Endothelial cell of umbilical vein (primary cell): ENCODE measurements at regions of chr4 and their contacts with region 1.

Region 1: DNA sequence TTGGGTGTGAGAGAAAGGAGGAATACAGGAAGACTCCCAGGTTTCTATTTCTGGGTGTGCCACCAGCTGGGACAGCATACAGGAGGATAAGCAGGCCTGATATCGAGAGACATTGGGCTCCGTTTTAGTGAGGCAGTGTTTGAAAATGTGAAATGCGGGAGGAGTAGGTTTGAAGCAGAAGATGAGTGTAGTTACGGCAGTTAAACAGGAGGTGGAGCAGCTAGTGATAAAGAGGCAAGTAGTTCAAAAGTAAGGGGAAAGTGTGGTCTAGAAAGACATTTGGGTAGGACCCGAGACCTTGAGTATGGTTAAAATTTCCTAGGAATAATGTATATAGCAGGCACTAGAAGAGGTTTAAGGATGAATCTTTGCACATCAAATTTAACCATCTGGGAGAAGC is 42.4 kb downstream of the DCUN1D4 start:
- DNase-seq: peak; percentile 40
- H3K4me3 ChIP-seq: no peak overlapping the region
- H3K27ac ChIP-seq: no peak overlapping the region
- H3K4me1 ChIP-seq: no peaks in the 10 kb centered on the region
- H3K27me3 ChIP-seq: no peaks in the 10 kb centered on the region
- CTCF ChIP-seq: peak; percentile 40 to 44
- POLR2A ChIP-seq: no peak

Region 2: GRCh38 chr4:52016981-52017380 is 131.6 kb after region 1 on chr4:
- CTCF ChIA-PET with region 1: interaction called, 6 read pairs
- POLR2A ChIA-PET with region 1: no interaction called
- dilution Hi-C with region 1: no loop called
- intact Hi-C with region 1: loop called (anchors 1 kb)
- DNase-seq: peak; percentile 22
- H3K4me3 ChIP-seq: no peak overlapping the region
- H3K27ac ChIP-seq: no peak overlapping the region
- H3K4me1 ChIP-seq: peaks cover 29% of the 10 kb centered on the region
- H3K27me3 ChIP-seq: no peaks in the 10 kb centered on the region
- CTCF ChIP-seq: no peak
- POLR2A ChIP-seq: no peak

Region 3: GRCh38 chr4:52032005-52032404 is 146.6 kb after region 1 on chr4:
- CTCF ChIA-PET with region 1: no interaction called
- POLR2A ChIA-PET with region 1: no interaction called
- dilution Hi-C with region 1: no loop called
- intact Hi-C with region 1: no loop called
- DNase-seq: no peak
- H3K4me3 ChIP-seq: no peak overlapping the region
- H3K27ac ChIP-seq: no peak overlapping the region
- H3K4me1 ChIP-seq: peaks cover 9% of the 10 kb centered on the region
- H3K27me3 ChIP-seq: no peaks in the 10 kb centered on the region
- CTCF ChIP-seq: no peak
- POLR2A ChIP-seq: no peak